ENCODE measurements at regions of chr6 and their contacts with region 1.

Region 1: DNA sequence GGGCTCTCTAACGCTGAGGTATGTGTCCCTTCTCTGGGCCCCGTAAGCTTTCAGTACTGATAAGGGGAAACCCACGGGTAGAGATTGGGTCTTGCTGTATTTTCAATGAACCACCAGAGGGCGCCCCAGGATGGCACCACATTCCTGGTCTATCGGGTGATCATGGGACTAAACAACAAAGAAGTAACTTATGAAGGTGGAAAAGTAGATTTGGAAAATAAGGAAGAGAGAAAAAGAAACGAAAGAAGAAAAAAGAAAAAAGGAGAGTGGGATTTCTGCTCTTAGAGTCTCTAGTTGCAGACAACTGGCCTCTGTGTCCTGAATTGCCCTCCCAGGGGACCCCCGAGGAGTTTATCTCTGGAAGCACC is 93.8 kb downstream of the GMPR start:
- DNase-seq: peak; percentile 68 to 92 (median 76)
- ATAC-seq: peak; percentile 96
- H3K4me3 ChIP-seq: peak overlapping the region; percentile 10
- H3K4me3 Mint-ChIP-seq: no peak overlapping the region
- H3K27ac ChIP-seq: no peak overlapping the region
- H3K27ac Mint-ChIP-seq: no peak overlapping the region
- H3K4me1 ChIP-seq: peaks cover 17% of the 10 kb centered on the region
- H3K4me1 Mint-ChIP-seq: no peaks in the 10 kb centered on the region
- H3K27me3 ChIP-seq: no peaks in the 10 kb centered on the region
- H3K27me3 Mint-ChIP-seq: no peaks in the 10 kb centered on the region
- CTCF ChIP-seq: peak; percentile 90

Region 2: GRCh38 chr6:15458021-15458459 is 874.1 kb before region 1 on chr6:
- CTCF ChIA-PET with region 1: no interaction called
- POLR2A ChIA-PET with region 1: no interaction called
- intact Hi-C with region 1: no loop called
- DNase-seq: no peak
- ATAC-seq: no peak
- H3K4me3 ChIP-seq: no peak overlapping the region
- H3K4me3 Mint-ChIP-seq: no peak overlapping the region
- H3K27ac ChIP-seq: no peak overlapping the region
- H3K27ac Mint-ChIP-seq: no peak overlapping the region
- H3K4me1 ChIP-seq: no peaks in the 10 kb centered on the region
- H3K4me1 Mint-ChIP-seq: peaks cover 68% of the 10 kb centered on the region
- H3K27me3 ChIP-seq: no peaks in the 10 kb centered on the region
- H3K27me3 Mint-ChIP-seq: no peaks in the 10 kb centered on the region
- CTCF ChIP-seq: no peak

Region 3: GRCh38 chr6:16277101-16277981 is 54.8 kb before region 1 on chr6:
- CTCF ChIA-PET with region 1: no interaction called
- POLR2A ChIA-PET with region 1: no interaction called
- intact Hi-C with region 1: no loop called
- DNase-seq: peak in 1 of 14 experiments; percentile 9
- ATAC-seq: no peak
- H3K4me3 ChIP-seq: no peak overlapping the region
- H3K4me3 Mint-ChIP-seq: no peak overlapping the region
- H3K27ac ChIP-seq: no peak overlapping the region
- H3K27ac Mint-ChIP-seq: no peak overlapping the region
- H3K4me1 ChIP-seq: no peaks in the 10 kb centered on the region
- H3K4me1 Mint-ChIP-seq: no peaks in the 10 kb centered on the region
- H3K27me3 ChIP-seq: no peaks in the 10 kb centered on the region
- H3K27me3 Mint-ChIP-seq: no peaks in the 10 kb centered on the region
- CTCF ChIP-seq: no peak

Region 4: GRCh38 chr6:16319813-16320532 is 12.2 kb before region 1 on chr6:
- CTCF ChIA-PET with region 1: interaction called, 47 read pairs
- POLR2A ChIA-PET with region 1: interaction called, 6 read pairs
- intact Hi-C with region 1: loop called (anchors 1 to 2 kb)
- DNase-seq: peak; percentile 41 to 89 (median 62)
- ATAC-seq: peak; percentile 55
- H3K4me3 ChIP-seq: peak overlapping the region; percentile 40
- H3K4me3 Mint-ChIP-seq: peak overlapping the region; percentile 70
- H3K27ac ChIP-seq: peak overlapping the region; percentile 63 to 93
- H3K27ac Mint-ChIP-seq: peak overlapping the region; percentile 94
- H3K4me1 ChIP-seq: peaks cover 82% of the 10 kb centered on the region
- H3K4me1 Mint-ChIP-seq: peaks cover 78% of the 10 kb centered on the region
- H3K27me3 ChIP-seq: no peaks in the 10 kb centered on the region
- H3K27me3 Mint-ChIP-seq: no peaks in the 10 kb centered on the region
- CTCF ChIP-seq: no peak

Region 5: GRCh38 chr6:16496991-16497801 is 165.0 kb after region 1 on chr6:
- CTCF ChIA-PET with region 1: interaction called, 9 read pairs
- POLR2A ChIA-PET with region 1: no interaction called
- intact Hi-C with region 1: loop called in 1 of 2 experiments (anchors 1 kb)
- DNase-seq: no peak
- ATAC-seq: no peak
- H3K4me3 ChIP-seq: no peak overlapping the region
- H3K4me3 Mint-ChIP-seq: no peak overlapping the region
- H3K27ac ChIP-seq: no peak overlapping the region
- H3K27ac Mint-ChIP-seq: no peak overlapping the region
- H3K4me1 ChIP-seq: peaks cover 7% of the 10 kb centered on the region
- H3K4me1 Mint-ChIP-seq: peaks cover 31% of the 10 kb centered on the region
- H3K27me3 ChIP-seq: no peaks in the 10 kb centered on the region
- H3K27me3 Mint-ChIP-seq: no peaks in the 10 kb centered on the region
- CTCF ChIP-seq: no peak

Region 6: DNA sequence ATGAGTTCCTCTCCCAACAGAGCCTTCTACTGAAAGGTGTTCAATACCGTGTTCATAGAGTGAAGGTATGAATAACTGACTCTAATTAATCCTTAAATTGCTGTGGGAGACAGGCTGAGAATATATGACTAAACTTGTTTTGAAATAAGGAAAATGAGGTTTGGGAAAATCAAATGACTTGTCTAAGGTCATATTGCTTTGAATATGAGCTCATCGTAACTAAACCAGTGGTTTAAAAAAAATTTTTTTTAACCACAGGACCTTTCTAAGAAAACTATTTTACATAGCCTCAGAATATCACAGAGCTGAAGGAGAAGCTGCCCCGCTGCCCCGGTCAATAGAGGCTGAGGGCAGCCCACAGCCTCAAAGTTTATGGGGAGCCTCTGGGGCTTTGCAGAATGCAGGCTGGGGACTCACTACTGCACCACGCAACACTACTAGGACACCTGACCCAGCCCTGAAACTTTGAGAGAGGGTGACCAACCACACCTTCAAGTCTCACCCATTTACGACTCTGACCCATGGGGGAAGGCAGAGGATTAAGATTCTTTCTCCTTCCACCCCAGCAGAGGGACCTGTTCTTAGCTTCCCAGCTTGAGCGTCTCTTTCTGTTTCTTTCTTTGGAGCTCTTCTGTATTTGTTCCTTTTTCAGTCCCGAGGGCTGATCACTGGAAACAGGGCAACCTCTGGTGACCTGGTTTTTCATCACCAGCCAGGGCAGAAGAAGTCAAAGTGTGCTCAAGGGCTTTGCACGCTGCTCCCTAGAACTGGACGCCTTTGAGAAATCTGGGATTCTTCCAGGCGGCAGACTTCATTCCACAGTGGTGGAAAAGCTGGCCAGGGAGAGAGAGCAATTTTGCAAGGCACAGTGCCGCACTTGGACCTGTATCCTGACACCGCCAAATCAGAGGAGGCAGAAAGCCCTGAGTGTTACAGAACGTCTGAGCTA is 208.9 kb after region 1 on chr6:
- CTCF ChIA-PET with region 1: no interaction called
- POLR2A ChIA-PET with region 1: no interaction called
- intact Hi-C with region 1: no loop called
- DNase-seq: no peak
- ATAC-seq: no peak
- H3K4me3 ChIP-seq: no peak overlapping the region
- H3K4me3 Mint-ChIP-seq: no peak overlapping the region
- H3K27ac ChIP-seq: no peak overlapping the region
- H3K27ac Mint-ChIP-seq: no peak overlapping the region
- H3K4me1 ChIP-seq: no peaks in the 10 kb centered on the region
- H3K4me1 Mint-ChIP-seq: no peaks in the 10 kb centered on the region
- H3K27me3 ChIP-seq: no peaks in the 10 kb centered on the region
- H3K27me3 Mint-ChIP-seq: no peaks in the 10 kb centered on the region
- CTCF ChIP-seq: no peak

Region 7: GRCh38 chr6:16770701-16771569 is 438.8 kb after region 1 on chr6:
- CTCF ChIA-PET with region 1: interaction called, 10 read pairs
- POLR2A ChIA-PET with region 1: no interaction called
- intact Hi-C with region 1: loop called in 1 of 2 experiments (anchors 2 kb)
- DNase-seq: peak; percentile 65 to 90 (median 73)
- ATAC-seq: peak; percentile 79
- H3K4me3 ChIP-seq: no peak overlapping the region
- H3K4me3 Mint-ChIP-seq: no peak overlapping the region
- H3K27ac ChIP-seq: no peak overlapping the region
- H3K27ac Mint-ChIP-seq: peak overlapping the region; percentile 40
- H3K4me1 ChIP-seq: peaks cover 20% of the 10 kb centered on the region
- H3K4me1 Mint-ChIP-seq: peaks cover 45% of the 10 kb centered on the region
- H3K27me3 ChIP-seq: no peaks in the 10 kb centered on the region
- H3K27me3 Mint-ChIP-seq: no peaks in the 10 kb centered on the region
- CTCF ChIP-seq: peak; percentile 96

Region 8: GRCh38 chr6:17086469-17086868 is 754.3 kb after region 1 on chr6:
- CTCF ChIA-PET with region 1: no interaction called
- POLR2A ChIA-PET with region 1: no interaction called
- intact Hi-C with region 1: loop called (anchors 2 to 5 kb)
- DNase-seq: peak in 4 of 14 experiments; percentile 4 to 41 (median 26)
- ATAC-seq: no peak
- H3K4me3 ChIP-seq: no peak overlapping the region
- H3K4me3 Mint-ChIP-seq: no peak overlapping the region
- H3K27ac ChIP-seq: no peak overlapping the region
- H3K27ac Mint-ChIP-seq: no peak overlapping the region
- H3K4me1 ChIP-seq: no peaks in the 10 kb centered on the region
- H3K4me1 Mint-ChIP-seq: no peaks in the 10 kb centered on the region
- H3K27me3 ChIP-seq: no peaks in the 10 kb centered on the region
- H3K27me3 Mint-ChIP-seq: peaks cover 33% of the 10 kb centered on the region
- CTCF ChIP-seq: peak; percentile 30